K562 (cell line): ENCODE measurements at regions of chr17 and their contacts with region 1.

Region 1: GRCh38 chr17:29807520-29808351 is 122.3 kb downstream of the SSH2 start:
- DNase-seq: peak; percentile 64 to 78 (median 68)
- ATAC-seq: peak; percentile 91
- H3K4me3 ChIP-seq: no peak overlapping the region
- H3K27ac ChIP-seq: no peak overlapping the region
- H3K4me1 ChIP-seq: peaks cover 3% of the 10 kb centered on the region in 2 experiments; a peak in 1 of 5 replicates
- H3K27me3 ChIP-seq: no peaks in the 10 kb centered on the region
- CTCF ChIP-seq: peak; percentile 74 to 90 (median 77)
- EP300 ChIP-seq: no peak
- POLR2A ChIP-seq: no peak
- RAD21 ChIP-seq: peak; percentile 82 to 85

Region 2: DNA sequence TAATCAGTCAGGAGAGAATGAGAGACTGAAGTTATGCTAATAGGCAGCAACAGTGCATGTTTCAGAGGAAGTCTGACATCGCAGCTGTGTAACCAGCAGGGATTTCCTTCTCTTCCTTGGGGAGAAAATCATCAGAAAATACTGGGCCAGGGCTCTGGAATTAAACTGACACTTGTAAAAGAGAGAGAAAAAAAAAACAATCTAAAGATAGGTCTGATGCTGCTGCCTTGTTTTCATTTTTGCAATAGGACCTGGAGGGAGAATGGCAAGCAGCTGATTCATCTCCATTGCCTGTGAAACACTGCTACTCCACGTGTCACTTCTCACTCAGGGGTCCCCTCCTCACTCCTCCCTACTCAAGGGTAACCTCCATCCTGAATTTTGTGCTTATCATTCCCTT is 167.3 kb before region 1 on chr17:
- CTCF ChIA-PET with region 1: interaction called, 5 read pairs
- POLR2A ChIA-PET with region 1: interaction called, 3 read pairs
- in situ Hi-C with region 1: no loop called
- intact Hi-C with region 1: loop called (anchors 1 kb)
- DNase-seq: no peak
- ATAC-seq: no peak
- H3K4me3 ChIP-seq: no peak overlapping the region
- H3K27ac ChIP-seq: no peak overlapping the region
- H3K4me1 ChIP-seq: peaks cover 12 to 22% of the 10 kb centered on the region in 2 experiments
- H3K27me3 ChIP-seq: no peaks in the 10 kb centered on the region
- CTCF ChIP-seq: no peak
- EP300 ChIP-seq: no peak
- POLR2A ChIP-seq: no peak
- RAD21 ChIP-seq: no peak

Region 3: DNA sequence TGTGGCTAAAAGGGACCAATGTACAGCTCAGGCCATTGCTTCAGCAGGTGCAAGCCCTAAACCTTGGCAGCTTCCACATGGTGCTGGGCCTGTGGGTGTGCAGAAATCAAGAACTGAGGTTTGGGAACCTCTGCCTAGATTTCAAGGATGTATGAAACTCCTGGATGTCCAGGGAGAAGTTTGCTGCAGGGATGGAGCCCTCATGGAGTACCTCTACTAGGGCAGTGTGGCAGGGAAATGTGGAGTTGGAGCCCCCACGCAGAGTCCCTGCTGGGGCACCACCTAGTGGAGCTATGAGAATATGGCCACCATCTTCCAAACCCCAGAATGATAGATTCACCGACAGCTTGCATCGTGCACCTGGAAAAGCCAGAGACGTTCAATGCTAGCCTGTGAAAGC is 146.7 kb after region 1 on chr17:
- CTCF ChIA-PET with region 1: no interaction called
- POLR2A ChIA-PET with region 1: no interaction called
- in situ Hi-C with region 1: no loop called
- intact Hi-C with region 1: no loop called
- DNase-seq: peak in 1 of 4 experiments; percentile 9
- ATAC-seq: no peak
- H3K4me3 ChIP-seq: no peak overlapping the region
- H3K27ac ChIP-seq: no peak overlapping the region
- H3K4me1 ChIP-seq: no peaks in the 10 kb centered on the region
- H3K27me3 ChIP-seq: no peaks in the 10 kb centered on the region
- CTCF ChIP-seq: peak; percentile 13 to 34 (median 22); a peak in 2 of 6 replicates
- EP300 ChIP-seq: no peak
- POLR2A ChIP-seq: no peak
- RAD21 ChIP-seq: no peak

Region 4: GRCh38 chr17:30021708-30022317 is 214.1 kb after region 1 on chr17:
- CTCF ChIA-PET with region 1: interaction called, 9 read pairs
- POLR2A ChIA-PET with region 1: no interaction called
- in situ Hi-C with region 1: no loop called
- intact Hi-C with region 1: loop called (anchors 5 kb)
- DNase-seq: peak; percentile 39 to 57 (median 45)
- ATAC-seq: peak; percentile 68; the same call in 1 of the 3 replicates
- H3K4me3 ChIP-seq: no peak overlapping the region
- H3K27ac ChIP-seq: no peak overlapping the region
- H3K4me1 ChIP-seq: no peaks in the 10 kb centered on the region
- H3K27me3 ChIP-seq: no peaks in the 10 kb centered on the region; a peak in 1 of 5 replicates
- CTCF ChIP-seq: peak; percentile 65 to 81 (median 72); a peak in 5 of 6 replicates
- EP300 ChIP-seq: no peak
- POLR2A ChIP-seq: no peak
- RAD21 ChIP-seq: peak; percentile 55 to 87

Region 5: DNA sequence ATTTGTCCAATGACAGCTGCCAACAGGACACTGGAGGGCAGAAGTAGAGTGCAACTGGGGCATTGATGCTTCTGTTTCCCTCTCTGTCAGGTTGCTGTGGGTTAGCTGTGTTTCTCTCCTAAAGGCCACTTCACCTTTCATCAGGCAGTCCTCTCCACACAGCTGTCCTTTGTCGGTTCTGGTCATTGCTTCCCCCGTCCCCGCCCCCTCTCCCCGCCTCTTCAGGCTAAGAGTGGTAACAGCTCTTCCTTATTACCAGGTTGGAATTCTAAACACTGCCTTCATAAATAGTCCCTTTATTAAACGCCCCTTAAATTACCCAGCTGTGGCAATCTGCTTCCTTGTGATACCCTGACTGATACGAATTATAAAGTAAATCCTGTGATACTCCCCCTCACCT is 277.1 kb after region 1 on chr17:
- CTCF ChIA-PET with region 1: no interaction called
- POLR2A ChIA-PET with region 1: no interaction called
- in situ Hi-C with region 1: loop called (anchors 10 kb)
- intact Hi-C with region 1: no loop called
- DNase-seq: no peak
- ATAC-seq: peak; percentile 55; the same call in 2 of the 3 replicates
- H3K4me3 ChIP-seq: no peak overlapping the region
- H3K27ac ChIP-seq: no peak overlapping the region
- H3K4me1 ChIP-seq: no peaks in the 10 kb centered on the region
- H3K27me3 ChIP-seq: peaks cover 25 to 27% of the 10 kb centered on the region in 2 experiments
- CTCF ChIP-seq: no peak
- EP300 ChIP-seq: no peak
- POLR2A ChIP-seq: no peak
- RAD21 ChIP-seq: no peak

Region 6: GRCh38 chr17:30093463-30094147 is 285.9 kb after region 1 on chr17:
- CTCF ChIA-PET with region 1: interaction called, 11 read pairs
- POLR2A ChIA-PET with region 1: no interaction called
- in situ Hi-C with region 1: loop called (anchors 10 kb)
- intact Hi-C with region 1: loop called (anchors 5 kb)
- DNase-seq: peak; percentile 75 to 79 (median 78)
- ATAC-seq: peak; percentile 92
- H3K4me3 ChIP-seq: no peak overlapping the region
- H3K27ac ChIP-seq: no peak overlapping the region
- H3K4me1 ChIP-seq: peaks cover 0 to 9% of the 10 kb centered on the region in 2 experiments; a peak in 3 of 5 replicates
- H3K27me3 ChIP-seq: peaks cover 15 to 20% of the 10 kb centered on the region in 2 experiments
- CTCF ChIP-seq: peak; percentile 77 to 91 (median 82)
- EP300 ChIP-seq: no peak
- POLR2A ChIP-seq: no peak
- RAD21 ChIP-seq: peak; percentile 90 to 94